AG04450 (cell line): ENCODE measurements at regions of chr17 and their contacts with region 1.

Region 1: GRCh38 chr17:30124273-30124796 is 7.7 kb downstream of the NSRP1 start:
- DNase-seq: no peak
- H3K4me3 ChIP-seq: no peak overlapping the region
- H3K27ac ChIP-seq: no peak overlapping the region
- H3K27me3 ChIP-seq: no peaks in the 10 kb centered on the region
- CTCF ChIP-seq: no peak

Region 2: DNA sequence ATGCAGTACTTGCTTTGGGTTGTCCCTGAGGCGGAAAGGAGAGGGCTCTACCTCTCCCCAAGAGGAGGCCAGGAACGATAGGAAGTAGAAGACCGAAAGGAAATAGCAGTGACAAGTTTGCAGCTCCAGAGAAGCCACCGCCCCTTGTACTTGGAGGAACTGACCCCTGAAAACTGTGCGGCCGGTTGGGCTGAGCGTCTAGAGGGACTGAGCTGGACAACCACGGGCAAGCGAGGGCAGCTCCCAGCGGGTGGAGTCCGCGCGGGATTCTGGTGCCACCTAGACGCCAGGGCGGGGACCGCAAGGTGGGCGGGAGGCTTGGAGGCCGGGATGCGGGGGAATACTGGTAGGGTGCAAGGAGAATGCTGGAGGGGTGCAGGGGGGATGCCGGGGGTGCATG is 112.4 kb after region 1 on chr17:
- CTCF ChIA-PET with region 1: interaction called, 13 read pairs
- POLR2A ChIA-PET with region 1: no interaction called
- DNase-seq: no peak
- H3K4me3 ChIP-seq: no peak overlapping the region
- H3K27ac ChIP-seq: no peak overlapping the region
- H3K27me3 ChIP-seq: peaks cover 70% of the 10 kb centered on the region
- CTCF ChIP-seq: peak; percentile 29; the same call in 1 of the 2 replicates

Region 3: GRCh38 chr17:30278032-30278431 is 153.7 kb after region 1 on chr17:
- CTCF ChIA-PET with region 1: interaction called, 27 read pairs
- POLR2A ChIA-PET with region 1: no interaction called
- DNase-seq: no peak
- H3K4me3 ChIP-seq: no peak overlapping the region
- H3K27ac ChIP-seq: no peak overlapping the region
- H3K27me3 ChIP-seq: no peaks in the 10 kb centered on the region
- CTCF ChIP-seq: peak; percentile 56

Region 4: GRCh38 chr17:30336369-30337171 is 212.2 kb after region 1 on chr17:
- CTCF ChIA-PET with region 1: interaction called, 10 read pairs
- POLR2A ChIA-PET with region 1: interaction called, 4 read pairs
- DNase-seq: no peak
- H3K4me3 ChIP-seq: no peak overlapping the region
- H3K27ac ChIP-seq: no peak overlapping the region
- H3K27me3 ChIP-seq: no peaks in the 10 kb centered on the region
- CTCF ChIP-seq: peak; percentile 53